Gastrocnemius medialis (tissue), 4 donors: ENCODE measurements at regions of chr12 and their contacts with region 1.

Region 1: DNA sequence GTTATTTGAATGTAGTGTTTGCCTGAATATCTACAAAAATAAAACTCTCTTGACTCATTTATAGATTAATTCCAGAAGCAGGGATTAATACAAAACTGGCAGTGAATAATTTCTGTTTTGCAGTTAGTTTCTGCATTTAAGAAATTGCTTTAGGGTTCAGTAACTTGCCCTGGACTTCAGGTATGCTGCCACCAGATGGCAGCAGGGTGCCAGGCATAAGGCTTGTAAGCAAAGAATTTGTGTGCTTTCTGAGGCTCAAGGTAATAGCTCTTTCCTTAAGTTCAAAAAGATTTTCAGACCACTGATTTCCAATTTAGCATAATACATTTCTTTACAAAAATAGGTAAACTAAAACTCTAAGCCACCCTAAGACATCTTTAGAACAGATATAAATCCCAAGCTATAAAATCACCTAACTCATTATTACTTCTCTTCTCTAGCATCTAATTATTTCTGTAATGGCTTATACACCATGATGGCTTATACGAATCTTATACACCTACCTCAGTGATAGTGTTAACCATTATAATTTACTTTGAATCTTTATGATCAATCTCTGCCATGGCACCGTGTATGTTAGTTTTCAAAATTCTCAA is 398.3 kb downstream of the APAF1 start:
- DNase-seq: peak in 1 of 2 donors; percentile 31
- ATAC-seq: no peak
- H3K4me3 ChIP-seq: no peak overlapping the region
- H3K27ac ChIP-seq: no peak overlapping the region
- H3K4me1 ChIP-seq: no peaks in the 10 kb centered on the region
- H3K27me3 ChIP-seq: no peaks in the 10 kb centered on the region
- CTCF ChIP-seq: peak; percentile 51 to 86 (median 60)
- POLR2A ChIP-seq: no peak

Region 2: DNA sequence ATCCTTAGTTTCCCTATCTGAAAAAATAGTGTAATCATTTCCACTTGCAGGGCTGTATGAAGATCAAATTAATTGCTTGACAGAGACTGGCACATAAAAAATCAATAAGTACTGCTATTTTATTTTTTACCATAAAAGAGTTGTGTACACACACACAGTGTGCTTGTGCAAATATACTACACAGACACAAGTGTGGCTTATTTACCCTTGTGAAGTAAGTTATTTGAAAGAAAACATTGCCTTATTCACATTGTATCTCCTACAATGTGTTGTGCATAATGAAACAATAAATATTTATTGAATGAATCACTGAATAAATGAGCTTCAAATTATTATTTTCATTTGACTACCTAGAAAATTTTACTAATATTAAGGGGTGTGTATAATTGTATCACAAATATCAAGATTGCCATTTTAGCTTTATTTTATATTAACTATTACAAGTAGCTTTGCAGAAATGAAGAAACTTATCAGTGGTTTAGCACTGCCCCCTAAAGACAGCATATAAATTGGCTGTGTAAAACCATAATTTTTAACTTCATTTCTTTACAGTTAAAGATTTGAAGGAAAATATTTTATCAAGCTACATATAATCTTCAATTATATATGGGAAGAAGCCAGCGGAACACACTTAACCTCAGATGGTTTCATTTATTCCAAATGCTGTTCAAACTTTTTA is 615.4 kb after region 1 on chr12:
- in situ Hi-C with region 1: loop called in 1 of 4 experiments (anchors 25 kb)
- intact Hi-C with region 1: loop called (anchors 5 kb)
- DNase-seq: no peak
- ATAC-seq: no peak
- H3K4me3 ChIP-seq: no peak overlapping the region
- H3K27ac ChIP-seq: no peak overlapping the region
- H3K4me1 ChIP-seq: no peaks in the 10 kb centered on the region
- H3K27me3 ChIP-seq: no peaks in the 10 kb centered on the region
- CTCF ChIP-seq: no peak
- POLR2A ChIP-seq: no peak

Region 3: DNA sequence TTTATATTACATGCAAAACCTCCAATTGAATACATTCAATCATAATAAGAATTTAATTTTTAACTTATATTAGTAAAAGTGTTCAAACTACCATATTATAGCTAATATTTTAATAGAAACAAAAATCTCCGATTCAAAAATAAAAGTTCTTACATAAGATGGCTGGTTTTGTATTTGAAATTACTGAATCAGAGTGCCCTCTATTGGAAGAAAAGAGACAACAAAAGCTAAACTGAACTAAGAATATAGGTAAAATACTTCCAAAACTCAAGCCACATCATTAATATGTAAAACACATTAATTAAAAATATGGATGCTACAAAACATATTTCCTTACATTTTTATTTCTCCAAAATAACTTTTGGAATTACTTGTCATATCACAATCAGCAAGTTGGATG is 724.4 kb after region 1 on chr12:
- in situ Hi-C with region 1: loop called (anchors 5 to 25 kb)
- intact Hi-C with region 1: loop called (anchors 5 kb)
- DNase-seq: no peak
- ATAC-seq: no peak
- H3K4me3 ChIP-seq: peak overlapping the region in 1 of 4 donors; percentile 19
- H3K27ac ChIP-seq: no peak overlapping the region
- H3K4me1 ChIP-seq: peaks cover 0 to 9% of the 10 kb centered on the region in 2 donors
- H3K27me3 ChIP-seq: no peaks in the 10 kb centered on the region
- CTCF ChIP-seq: peak in 2 of 5 experiments; percentile 26 to 39
- POLR2A ChIP-seq: no peak